ENCODE measurements at regions of chr2 and their contacts with region 1.

Region 1: GRCh38 chr2:24297663-24298062 is 62.7 kb downstream of the ITSN2 start:
- DNase-seq: no peak
- H3K4me3 Mint-ChIP-seq: no peak overlapping the region
- H3K27ac Mint-ChIP-seq: no peak overlapping the region
- H3K4me1 Mint-ChIP-seq: no peaks in the 10 kb centered on the region
- H3K27me3 Mint-ChIP-seq: no peaks in the 10 kb centered on the region
- CTCF ChIP-seq: no peak

Region 2: DNA sequence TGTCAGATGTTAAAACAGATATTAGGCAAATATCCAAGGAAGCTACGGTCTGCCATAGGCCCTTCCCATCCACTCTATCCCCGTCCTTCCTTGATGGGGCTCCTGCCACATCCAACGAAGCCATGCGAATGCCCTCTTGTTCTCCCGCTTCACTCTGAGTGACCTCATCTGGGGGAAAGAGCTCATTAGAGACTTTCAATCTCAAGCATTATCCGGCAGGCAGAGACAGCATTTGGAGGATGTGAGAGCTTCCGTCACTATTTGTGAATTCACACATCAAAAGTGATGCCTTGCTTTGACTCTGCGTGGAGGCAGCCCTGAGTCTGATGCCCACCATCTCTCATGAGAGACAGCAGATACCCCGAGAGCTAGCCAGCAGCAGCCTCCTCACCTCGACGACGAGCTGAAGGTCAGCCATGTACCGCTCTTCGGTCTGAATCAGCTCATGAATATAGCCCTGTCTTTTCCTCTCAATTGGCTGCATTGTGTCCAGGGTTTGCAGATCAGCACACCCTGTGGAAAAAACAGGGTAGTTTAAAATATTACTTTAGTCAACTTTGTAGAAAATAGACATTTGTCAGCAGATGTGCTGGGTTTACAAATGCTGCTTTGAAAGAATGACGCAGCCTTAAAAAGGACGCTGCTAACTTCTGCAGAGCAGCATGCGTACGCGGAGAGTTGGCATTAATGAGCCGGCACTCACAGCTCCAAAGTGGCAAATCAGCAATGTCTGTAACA is 76.9 kb before region 1 on chr2:
- CTCF ChIA-PET with region 1: no interaction called
- POLR2A ChIA-PET with region 1: no interaction called
- intact Hi-C with region 1: no loop called
- DNase-seq: no peak
- H3K4me3 Mint-ChIP-seq: no peak overlapping the region
- H3K27ac Mint-ChIP-seq: no peak overlapping the region
- H3K4me1 Mint-ChIP-seq: no peaks in the 10 kb centered on the region
- H3K27me3 Mint-ChIP-seq: no peaks in the 10 kb centered on the region
- CTCF ChIP-seq: no peak

Region 3: GRCh38 chr2:24269265-24269664 is 28.4 kb before region 1 on chr2:
- CTCF ChIA-PET with region 1: no interaction called
- POLR2A ChIA-PET with region 1: no interaction called
- intact Hi-C with region 1: no loop called
- DNase-seq: peak; percentile 22
- H3K4me3 Mint-ChIP-seq: no peak overlapping the region
- H3K27ac Mint-ChIP-seq: no peak overlapping the region
- H3K4me1 Mint-ChIP-seq: no peaks in the 10 kb centered on the region
- H3K27me3 Mint-ChIP-seq: no peaks in the 10 kb centered on the region
- CTCF ChIP-seq: no peak

Region 4: DNA sequence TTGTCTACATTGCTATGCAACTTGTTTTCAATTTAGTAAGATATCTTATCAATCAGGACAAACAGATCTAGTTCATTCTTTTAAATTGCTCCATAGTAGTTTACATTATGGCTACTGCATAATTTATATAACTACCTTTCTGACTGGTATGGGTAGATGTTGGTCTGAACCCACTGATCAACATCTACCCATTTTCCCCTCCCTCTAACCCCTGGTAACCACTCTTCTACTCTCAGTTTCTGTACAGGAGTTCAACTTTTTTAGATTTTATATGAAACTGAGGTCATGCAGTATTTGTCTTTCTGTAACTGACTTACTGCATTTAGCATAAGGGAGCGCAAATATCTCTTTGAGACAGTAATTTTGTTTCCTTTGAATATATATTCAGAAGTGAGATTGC is 10.5 kb before region 1 on chr2:
- CTCF ChIA-PET with region 1: interaction called, 10 read pairs
- POLR2A ChIA-PET with region 1: interaction called, 4 read pairs
- intact Hi-C with region 1: no loop called
- DNase-seq: no peak
- H3K4me3 Mint-ChIP-seq: no peak overlapping the region
- H3K27ac Mint-ChIP-seq: no peak overlapping the region
- H3K4me1 Mint-ChIP-seq: no peaks in the 10 kb centered on the region
- H3K27me3 Mint-ChIP-seq: no peaks in the 10 kb centered on the region
- CTCF ChIP-seq: no peak

Region 5: DNA sequence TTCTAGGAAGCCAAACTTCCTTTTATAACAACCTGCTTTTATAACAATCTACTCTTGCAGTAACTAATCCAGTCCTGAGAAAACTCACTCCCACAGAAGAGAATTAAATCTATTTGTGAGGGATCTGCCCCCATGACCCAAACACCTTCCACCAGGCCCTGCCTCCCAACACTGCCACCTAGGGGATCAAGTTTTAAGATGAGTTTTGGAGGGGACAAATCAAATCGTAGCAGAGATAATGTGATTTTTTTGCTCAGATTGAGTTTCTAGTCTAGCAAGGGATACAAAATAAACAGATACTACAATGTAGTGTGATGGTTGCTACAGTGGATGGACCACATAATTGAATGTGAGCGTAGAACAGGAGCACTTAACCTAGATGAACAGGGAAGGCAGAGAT is 245.6 kb after region 1 on chr2:
- CTCF ChIA-PET with region 1: no interaction called
- POLR2A ChIA-PET with region 1: no interaction called
- intact Hi-C with region 1: no loop called
- DNase-seq: no peak
- H3K4me3 Mint-ChIP-seq: no peak overlapping the region
- H3K27ac Mint-ChIP-seq: no peak overlapping the region
- H3K4me1 Mint-ChIP-seq: no peaks in the 10 kb centered on the region
- H3K27me3 Mint-ChIP-seq: no peaks in the 10 kb centered on the region
- CTCF ChIP-seq: no peak

Measured in MCF 10A (cell line).